Activated CD4-positive, alpha-beta memory T cell treated with anti-CD3 and anti-CD28 coated beads, Interleukin-2, amount 10 ng/mL, durations not matched to agents 7 days and 5 days (primary cell): ENCODE measurements at regions of chr6 and their contacts with region 1.

Region 1: DNA sequence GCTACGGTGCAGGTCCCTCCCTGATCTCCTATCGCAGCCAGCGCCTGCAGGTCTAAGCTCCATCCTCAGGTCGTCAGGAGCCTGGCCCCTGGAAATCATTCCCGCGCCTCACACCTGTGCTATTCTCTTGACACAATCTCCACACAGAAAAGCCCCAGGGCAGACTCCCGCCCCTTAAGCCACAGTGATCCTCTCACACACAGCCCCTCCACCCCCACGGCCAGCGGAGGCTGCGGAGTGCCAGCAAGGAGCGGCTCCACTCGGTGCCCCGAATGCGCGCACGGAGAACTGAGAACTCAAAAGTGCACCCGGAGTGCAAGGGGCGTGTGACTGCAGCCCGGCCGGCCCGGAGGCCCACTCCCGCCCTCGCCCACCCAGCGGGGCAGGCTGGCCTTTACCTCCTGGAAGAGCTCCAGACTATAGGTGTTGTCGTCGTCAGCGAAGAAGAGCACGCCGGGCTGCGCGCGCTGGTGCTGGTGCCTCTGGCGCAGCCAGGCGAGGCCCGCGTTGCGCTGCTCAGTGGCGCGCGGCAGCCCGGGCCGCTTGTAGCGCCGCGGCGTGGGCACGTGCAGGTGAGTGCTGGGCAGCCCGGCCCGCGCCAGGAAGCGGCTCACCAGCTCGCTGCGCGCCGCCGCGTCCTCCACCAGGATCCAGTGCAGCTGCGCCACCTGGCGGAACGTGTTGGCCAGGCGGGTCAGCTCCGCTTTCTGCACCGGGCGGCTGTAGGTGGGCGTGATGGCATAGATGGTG is 1.2 kb downstream of the B3GAT2 start:
- DNase-seq: peak; percentile 86
- H3K4me3 Mint-ChIP-seq: peak overlapping the region; percentile 49
- H3K27ac Mint-ChIP-seq: no peak overlapping the region
- H3K4me1 Mint-ChIP-seq: peaks cover 20% of the 10 kb centered on the region
- H3K27me3 Mint-ChIP-seq: peaks cover 51% of the 10 kb centered on the region

Region 2: GRCh38 chr6:70221025-70221714 is 734.4 kb before region 1 on chr6:
- CTCF ChIA-PET with region 1: interaction called, 11 read pairs
- POLR2A ChIA-PET with region 1: no interaction called
- DNase-seq: no peak
- H3K4me3 Mint-ChIP-seq: no peak overlapping the region
- H3K27ac Mint-ChIP-seq: no peak overlapping the region
- H3K4me1 Mint-ChIP-seq: no peaks in the 10 kb centered on the region
- H3K27me3 Mint-ChIP-seq: peaks cover 5% of the 10 kb centered on the region

Region 3: GRCh38 chr6:70310063-70310694 is 645.4 kb before region 1 on chr6:
- CTCF ChIA-PET with region 1: interaction called, 17 read pairs
- POLR2A ChIA-PET with region 1: interaction called, 3 read pairs
- DNase-seq: no peak
- H3K4me3 Mint-ChIP-seq: no peak overlapping the region
- H3K27ac Mint-ChIP-seq: no peak overlapping the region
- H3K4me1 Mint-ChIP-seq: peaks cover 1% of the 10 kb centered on the region
- H3K27me3 Mint-ChIP-seq: peaks cover 27% of the 10 kb centered on the region

Region 4: GRCh38 chr6:70520575-70520974 is 435.0 kb before region 1 on chr6:
- CTCF ChIA-PET with region 1: interaction called, 44 read pairs
- POLR2A ChIA-PET with region 1: interaction called, 3 read pairs
- DNase-seq: no peak
- H3K4me3 Mint-ChIP-seq: no peak overlapping the region
- H3K27ac Mint-ChIP-seq: no peak overlapping the region
- H3K4me1 Mint-ChIP-seq: peaks cover 4% of the 10 kb centered on the region
- H3K27me3 Mint-ChIP-seq: no peaks in the 10 kb centered on the region

Region 5: GRCh38 chr6:70706491-70707123 is 249.0 kb before region 1 on chr6:
- CTCF ChIA-PET with region 1: interaction called, 32 read pairs
- POLR2A ChIA-PET with region 1: no interaction called
- DNase-seq: no peak
- H3K4me3 Mint-ChIP-seq: no peak overlapping the region
- H3K27ac Mint-ChIP-seq: no peak overlapping the region
- H3K4me1 Mint-ChIP-seq: peaks cover 23% of the 10 kb centered on the region
- H3K27me3 Mint-ChIP-seq: no peaks in the 10 kb centered on the region

Region 6: DNA sequence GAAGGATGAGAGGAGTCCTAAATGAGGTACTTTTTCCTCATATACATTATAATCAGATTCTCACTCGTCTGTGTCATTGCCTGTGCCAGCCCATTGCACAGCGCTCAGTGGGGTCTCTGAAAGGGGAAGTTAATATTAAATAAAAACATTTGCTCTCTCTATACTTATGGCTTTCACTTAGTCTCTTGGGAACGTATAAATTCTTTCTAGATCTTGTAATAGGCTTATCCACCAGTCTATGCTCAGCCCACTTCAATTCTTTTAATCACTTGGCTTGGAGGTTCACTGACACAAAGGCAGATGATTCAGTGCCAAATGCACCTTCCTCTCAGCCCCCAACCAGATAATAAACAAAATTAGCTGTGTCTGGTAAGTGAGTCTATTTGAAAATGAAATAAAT is 168.7 kb after region 1 on chr6:
- CTCF ChIA-PET with region 1: no interaction called
- POLR2A ChIA-PET with region 1: no interaction called
- DNase-seq: no peak
- H3K4me3 Mint-ChIP-seq: no peak overlapping the region
- H3K27ac Mint-ChIP-seq: no peak overlapping the region
- H3K4me1 Mint-ChIP-seq: no peaks in the 10 kb centered on the region
- H3K27me3 Mint-ChIP-seq: no peaks in the 10 kb centered on the region